CD8-positive, alpha-beta T cell (primary cell): ENCODE measurements at regions of chr2 and their contacts with region 1.

Region 1: DNA sequence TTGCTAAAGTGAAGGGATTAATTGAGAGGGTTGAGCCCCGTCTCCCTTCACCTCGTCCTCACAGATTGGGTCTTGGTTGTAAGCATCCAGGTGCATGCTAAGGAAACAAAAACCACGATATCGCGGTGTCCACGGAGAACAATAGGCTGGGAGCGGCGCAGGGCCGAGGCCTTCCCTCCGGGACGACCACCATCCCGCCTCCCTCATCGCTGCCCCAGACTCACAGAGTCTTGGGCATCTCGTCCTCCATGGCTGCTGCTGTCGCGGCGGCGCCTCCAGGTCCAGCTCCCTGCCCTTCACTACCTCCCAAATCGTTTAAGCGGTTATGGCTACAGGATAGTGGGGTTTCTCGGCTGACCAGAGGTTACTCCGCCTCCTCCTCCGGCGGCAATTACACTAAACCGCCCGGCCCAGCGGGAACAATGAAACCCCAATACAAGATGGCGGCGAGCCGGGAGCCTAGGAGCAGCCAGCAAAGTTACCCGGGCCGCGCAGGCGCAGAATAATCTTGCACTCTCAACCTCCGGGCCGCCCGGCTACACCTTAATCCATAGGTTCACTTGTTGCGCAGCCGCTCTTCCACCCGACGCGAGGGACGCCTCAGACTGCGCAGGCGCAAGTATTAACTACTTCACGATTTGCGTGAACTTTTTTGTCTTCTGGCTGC is at the start of gene TIA1:
- DNase-seq: peak; percentile 96 to 100 (median 98)
- ATAC-seq: peak; percentile 98
- H3K4me3 ChIP-seq: peak within 1 kb of the TSS; percentile 86 to 90
- H3K4me3 Mint-ChIP-seq: peak within 1 kb of the TSS; percentile 97
- H3K27ac ChIP-seq: peak within 1 kb of the TSS; percentile 86 to 92
- H3K27ac Mint-ChIP-seq: peak within 1 kb of the TSS; percentile 98
- H3K4me1 ChIP-seq: peaks cover 30% of the 10 kb centered on the region
- H3K4me1 Mint-ChIP-seq: peaks cover 37% of the 10 kb centered on the region
- H3K27me3 ChIP-seq: no peaks in the 10 kb centered on the region
- H3K27me3 Mint-ChIP-seq: no peaks in the 10 kb centered on the region
- CTCF ChIP-seq: no peak
- total RNA-seq, gene TIA1: 55.9 to 62.6 TPM

Region 2: GRCh38 chr2:69893684-69894551 is 354.4 kb before region 1 on chr2 and contains the start of gene SNRNP27:
- CTCF ChIA-PET with region 1: no interaction called
- POLR2A ChIA-PET with region 1: no interaction called
- intact Hi-C with region 1: no loop called
- DNase-seq: peak; percentile 71 to 89 (median 83)
- ATAC-seq: peak; percentile 92
- H3K4me3 ChIP-seq: peak within 1 kb of the TSS; percentile 85 to 88
- H3K4me3 Mint-ChIP-seq: peak within 1 kb of the TSS; percentile 99
- H3K27ac ChIP-seq: peak within 1 kb of the TSS; percentile 82 to 86
- H3K27ac Mint-ChIP-seq: peak within 1 kb of the TSS; percentile 99
- H3K4me1 ChIP-seq: peaks cover 13% of the 10 kb centered on the region
- H3K4me1 Mint-ChIP-seq: peaks cover 46% of the 10 kb centered on the region
- H3K27me3 ChIP-seq: no peaks in the 10 kb centered on the region
- H3K27me3 Mint-ChIP-seq: no peaks in the 10 kb centered on the region
- CTCF ChIP-seq: no peak
- total RNA-seq, gene SNRNP27: 47.9 to 58.5 TPM

Region 3: GRCh38 chr2:70258532-70258874 is 10.2 kb after region 1 on chr2:
- CTCF ChIA-PET with region 1: interaction called, 3 read pairs
- POLR2A ChIA-PET with region 1: interaction called, 19 read pairs
- intact Hi-C with region 1: loop called (anchors 1 kb)
- DNase-seq: no peak
- ATAC-seq: no peak
- H3K4me3 ChIP-seq: peak overlapping the region; percentile 62 to 88
- H3K4me3 Mint-ChIP-seq: peak overlapping the region; percentile 86
- H3K27ac ChIP-seq: peak overlapping the region in 1 of 2 experiments; percentile 54
- H3K27ac Mint-ChIP-seq: peak overlapping the region; percentile 77
- H3K4me1 ChIP-seq: peaks cover 15% of the 10 kb centered on the region
- H3K4me1 Mint-ChIP-seq: peaks cover 42% of the 10 kb centered on the region
- H3K27me3 ChIP-seq: no peaks in the 10 kb centered on the region
- H3K27me3 Mint-ChIP-seq: no peaks in the 10 kb centered on the region
- CTCF ChIP-seq: no peak